Psoas muscle (tissue), 8 donors: ENCODE measurements at regions of chr13 and their contacts with region 1.

Region 1: GRCh38 chr13:98528663-98529570 is 48.0 kb downstream of the STK24 start:
- DNase-seq: peak in 1 of 2 donors; percentile 63
- ATAC-seq: peak in 3 of 4 donors; percentile 45 to 62 (median 55)
- H3K4me3 ChIP-seq: no peak overlapping the region
- H3K27ac ChIP-seq: no peak overlapping the region
- H3K4me1 ChIP-seq: peaks cover 67% of the 10 kb centered on the region
- H3K27me3 ChIP-seq: no peaks in the 10 kb centered on the region
- CTCF ChIP-seq: no peak

Region 2: DNA sequence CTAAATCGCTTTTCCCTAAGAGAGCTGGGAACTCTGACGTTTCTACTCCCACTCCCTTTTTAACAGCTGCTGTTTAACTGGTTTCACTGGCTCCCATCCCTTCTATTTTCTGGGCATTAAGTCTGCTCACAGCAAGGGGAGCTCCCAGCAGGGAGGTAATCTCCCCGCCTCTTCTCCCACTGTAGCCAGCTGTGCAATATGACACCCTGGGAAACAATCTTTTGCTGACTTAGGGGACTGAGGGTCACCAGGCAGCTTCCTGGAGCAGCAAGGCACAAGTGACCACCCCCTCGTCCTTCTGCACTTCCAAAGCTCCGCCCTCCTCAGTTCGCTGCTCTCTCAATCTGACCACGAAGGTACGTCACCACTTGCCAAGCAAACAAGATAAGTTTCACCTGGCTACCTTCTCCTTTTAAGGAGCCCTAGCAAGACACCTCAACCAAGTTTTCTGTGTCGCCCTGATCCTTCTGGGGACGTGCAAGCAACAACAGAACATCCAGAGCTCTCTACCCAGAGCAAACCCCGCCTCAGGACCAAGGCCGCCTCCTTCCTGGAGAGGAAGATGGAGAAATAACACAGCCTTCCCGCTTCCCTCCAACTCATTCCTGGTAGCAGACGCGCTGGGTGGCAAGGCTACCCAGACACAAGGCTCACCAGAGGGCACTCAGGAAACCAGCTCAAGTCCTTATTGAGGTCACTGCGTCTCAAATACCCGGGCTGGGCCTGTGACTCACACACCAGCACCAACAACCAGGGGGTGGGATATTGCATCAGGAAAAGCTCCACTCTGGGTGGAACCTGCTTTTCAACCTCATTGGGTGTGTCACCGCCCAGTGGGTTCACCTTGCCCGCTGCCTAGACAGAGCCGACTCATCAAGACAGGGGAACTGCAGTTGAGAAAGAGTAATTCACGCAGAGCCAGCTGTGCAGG is 44.4 kb before region 1 on chr13:
- intact Hi-C with region 1: loop called in 1 of 2 experiments (anchors 5 kb)
- DNase-seq: peak; percentile 82 to 88
- ATAC-seq: peak; percentile 85 to 89 (median 86)
- H3K4me3 ChIP-seq: peak overlapping the region; percentile 37
- H3K27ac ChIP-seq: peak overlapping the region; percentile 87
- H3K4me1 ChIP-seq: peaks cover 68% of the 10 kb centered on the region
- H3K27me3 ChIP-seq: no peaks in the 10 kb centered on the region
- CTCF ChIP-seq: no peak

Region 3: GRCh38 chr13:98576963-98577822 is 48.3 kb after region 1 on chr13 and contains the start of gene STK24:
- intact Hi-C with region 1: no loop called
- DNase-seq: peak; percentile 82 to 84
- ATAC-seq: peak; percentile 76 to 89 (median 82)
- H3K4me3 ChIP-seq: peak within 1 kb of the TSS; percentile 98
- H3K27ac ChIP-seq: peak within 1 kb of the TSS; percentile 97
- H3K4me1 ChIP-seq: peaks cover 31% of the 10 kb centered on the region
- H3K27me3 ChIP-seq: no peaks in the 10 kb centered on the region
- CTCF ChIP-seq: no peak
- total RNA-seq, gene STK24: 27.2 to 38.7 (median 33.9) TPM

Region 4: DNA sequence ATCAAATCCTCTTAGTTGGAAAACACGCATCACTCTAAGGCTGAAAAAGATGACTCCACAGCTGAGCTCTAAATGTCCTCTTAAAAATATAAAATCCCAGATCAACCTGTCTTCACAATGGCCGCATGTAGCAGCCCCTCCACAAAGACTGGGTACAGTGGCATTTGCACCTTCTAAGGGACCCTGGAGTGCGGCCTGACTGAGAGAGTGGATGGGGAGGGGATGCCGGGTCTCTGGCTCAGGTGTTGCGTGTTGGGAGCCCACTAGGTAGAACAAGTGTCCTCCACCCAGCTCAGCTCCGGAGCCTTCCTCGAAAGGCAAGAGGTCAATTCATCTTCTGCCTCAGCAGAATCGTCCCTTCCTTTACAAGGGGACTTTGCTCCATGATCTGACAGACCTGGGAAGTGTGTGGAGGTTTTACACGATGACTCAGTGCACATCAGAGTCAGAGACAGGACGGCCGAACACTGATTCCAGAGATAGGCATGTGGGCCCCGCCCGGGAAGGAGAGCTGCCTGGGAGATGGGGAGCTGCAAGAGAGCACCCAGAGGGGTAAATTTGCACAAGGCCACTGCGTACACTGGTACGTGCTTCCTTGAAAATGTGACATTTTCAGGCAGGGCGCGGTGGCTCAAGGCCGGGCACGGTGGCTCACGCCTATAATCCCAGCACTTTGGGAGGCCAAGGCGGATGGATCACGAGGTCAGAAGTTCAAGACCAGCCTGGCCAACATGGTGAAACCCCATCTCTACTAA is 247.1 kb after region 1 on chr13:
- intact Hi-C with region 1: no loop called
- DNase-seq: no peak
- ATAC-seq: no peak
- H3K4me3 ChIP-seq: no peak overlapping the region
- H3K27ac ChIP-seq: no peak overlapping the region
- H3K4me1 ChIP-seq: no peaks in the 10 kb centered on the region
- H3K27me3 ChIP-seq: peaks cover 0 to 4% (median 0%) of the 10 kb centered on the region in 3 donors
- CTCF ChIP-seq: no peak